Head of caudate nucleus (tissue), 42 donors: ENCODE measurements at regions of chr17 and their contacts with region 1.

Region 1: GRCh38 chr17:17972126-17972951 is at the starts of genes DRC3 and TOM1L2:
- DNase-seq: peak; percentile 100

Region 2: GRCh38 chr17:17849845-17850373 is 122.4 kb before region 1 on chr17:
- intact Hi-C with region 1: no loop called
- DNase-seq: peak in 34 of 42 donors; percentile 28 to 84 (median 60)

Region 3: GRCh38 chr17:17928398-17929287 is 43.7 kb before region 1 on chr17:
- intact Hi-C with region 1: loop called (anchors 5 kb)
- DNase-seq: peak in 41 of 42 donors; percentile 27 to 85 (median 59)

Region 4: GRCh38 chr17:18028114-18028951 is 56.0 kb after region 1 on chr17:
- intact Hi-C with region 1: no loop called
- DNase-seq: no peak

Region 5: DNA sequence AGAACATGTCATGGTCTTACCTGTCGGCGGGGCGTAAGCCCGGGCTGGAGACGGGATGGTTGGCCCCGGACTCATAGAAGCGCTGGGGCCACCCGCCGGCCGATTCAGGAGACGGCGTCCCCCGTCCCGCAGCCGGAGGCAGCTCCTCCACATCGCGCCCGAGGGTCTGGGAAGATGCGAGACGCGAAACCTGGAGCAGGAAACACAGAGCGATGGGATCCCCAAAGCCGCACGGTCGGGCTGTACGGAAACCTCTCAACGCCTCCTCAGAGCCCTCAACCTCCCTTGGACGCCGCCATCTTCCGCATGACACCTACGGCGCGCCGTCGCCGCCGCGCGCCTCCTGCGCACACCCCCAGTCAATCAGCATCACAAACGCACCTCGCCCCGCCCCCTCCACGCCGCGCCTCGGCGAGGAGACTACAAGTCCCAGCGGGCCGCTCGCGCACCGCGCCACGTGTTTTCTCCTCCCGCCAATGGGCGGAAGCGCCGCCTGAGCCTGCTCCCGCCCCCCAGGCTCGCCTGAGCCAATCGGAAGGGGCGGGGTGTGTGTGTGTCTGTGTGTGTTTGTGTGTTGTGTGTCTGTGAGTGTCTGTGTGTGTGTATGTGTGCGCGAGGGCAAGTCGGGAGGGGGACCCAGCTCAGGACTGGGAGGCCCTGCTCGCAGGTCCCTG is 66.7 kb after region 1 on chr17 and contains the starts of genes ATPAF2 and GID4:
- intact Hi-C with region 1: loop called (anchors 5 kb)
- DNase-seq: peak; percentile 98 to 100 (median 100)